Activated CD4-positive, alpha-beta memory T cell treated with anti-CD3 and anti-CD28 coated beads for 36 hours (primary cell): ENCODE measurements at regions of chr15 and their contacts with region 1.

Region 1: DNA sequence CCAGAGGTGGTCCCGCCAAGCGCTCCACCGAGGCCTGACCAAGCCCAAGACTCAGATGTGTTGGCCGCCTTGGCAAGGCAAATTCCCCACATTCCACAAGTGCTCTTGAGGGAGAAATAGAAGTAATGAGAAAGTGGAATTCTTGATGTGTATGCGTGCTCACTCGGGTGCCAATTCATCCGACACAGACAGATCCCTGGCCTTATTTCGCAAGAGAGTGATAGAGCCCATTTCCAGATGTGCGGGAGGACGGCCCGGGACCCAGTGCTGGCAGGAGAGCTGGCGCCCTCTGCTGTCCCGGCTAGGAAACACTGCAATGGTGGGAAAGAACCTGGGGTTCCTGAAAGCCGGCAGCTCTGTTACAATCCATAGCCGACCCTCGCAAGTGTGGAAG is 76.0 kb downstream of the HMG20A start:
- DNase-seq: peak; percentile 81
- H3K4me3 Mint-ChIP-seq: no peak overlapping the region
- H3K27ac Mint-ChIP-seq: no peak overlapping the region
- H3K4me1 Mint-ChIP-seq: peaks cover 17% of the 10 kb centered on the region
- H3K27me3 Mint-ChIP-seq: no peaks in the 10 kb centered on the region

Region 2: DNA sequence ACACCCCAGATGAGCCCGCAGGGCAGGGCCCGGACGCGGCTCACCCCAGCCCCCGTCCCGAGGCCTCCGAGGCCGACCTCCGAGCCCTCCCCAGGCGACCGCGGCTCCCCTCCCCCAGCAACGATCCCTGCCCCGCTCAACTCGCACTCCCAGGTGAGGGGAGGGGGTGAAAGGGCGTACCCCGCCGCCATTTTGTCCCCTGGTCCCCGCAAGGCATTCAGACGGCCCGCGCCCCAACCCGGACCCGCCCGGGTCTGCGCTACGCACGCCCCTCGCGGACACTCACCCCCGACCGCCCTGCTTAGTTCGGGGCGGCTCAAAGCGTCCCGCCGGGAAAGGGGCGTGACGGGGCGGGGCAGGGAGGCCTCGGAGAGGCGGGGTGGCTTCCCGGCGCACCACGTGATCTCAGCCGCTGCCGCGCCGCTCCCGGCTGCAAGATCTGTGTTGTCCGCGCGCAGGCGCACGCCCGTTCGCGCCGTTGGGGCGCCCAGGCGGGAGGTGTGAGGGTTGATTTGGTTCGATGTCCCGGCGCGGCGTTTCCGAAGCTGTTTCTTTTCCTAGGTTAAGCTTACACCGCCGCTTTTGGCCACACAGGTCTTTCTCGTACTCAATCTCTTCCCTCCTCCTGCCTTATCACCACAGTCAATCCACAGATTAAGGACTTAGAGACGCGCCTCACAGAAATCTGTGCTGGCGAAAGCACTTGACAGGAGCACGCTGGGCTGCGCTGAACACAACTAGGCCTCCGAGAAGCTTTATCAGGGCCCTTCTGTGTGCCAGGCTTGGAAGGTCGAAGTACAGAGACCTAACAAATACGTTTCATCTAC is 591.5 kb before region 1 on chr15 and contains the start of gene SCAPER:
- CTCF ChIA-PET with region 1: interaction called, 3 read pairs
- POLR2A ChIA-PET with region 1: no interaction called
- intact Hi-C with region 1: loop called (anchors 10 kb)
- DNase-seq: peak; percentile 95
- H3K4me3 Mint-ChIP-seq: peak within 1 kb of the TSS; percentile 91
- H3K27ac Mint-ChIP-seq: peak within 1 kb of the TSS; percentile 83
- H3K4me1 Mint-ChIP-seq: peaks cover 31% of the 10 kb centered on the region
- H3K27me3 Mint-ChIP-seq: no peaks in the 10 kb centered on the region
- total RNA-seq, gene SCAPER: 21.5 to 22.9 TPM

Region 3: GRCh38 chr15:77107531-77108355 is 389.0 kb before region 1 on chr15:
- CTCF ChIA-PET with region 1: interaction called, 15 read pairs
- POLR2A ChIA-PET with region 1: no interaction called
- intact Hi-C with region 1: no loop called
- DNase-seq: peak; percentile 61
- H3K4me3 Mint-ChIP-seq: no peak overlapping the region
- H3K27ac Mint-ChIP-seq: no peak overlapping the region
- H3K4me1 Mint-ChIP-seq: no peaks in the 10 kb centered on the region
- H3K27me3 Mint-ChIP-seq: no peaks in the 10 kb centered on the region

Region 4: GRCh38 chr15:77118882-77119321 is 377.8 kb before region 1 on chr15:
- CTCF ChIA-PET with region 1: interaction called, 80 read pairs
- POLR2A ChIA-PET with region 1: no interaction called
- intact Hi-C with region 1: loop called (anchors 2 kb)
- DNase-seq: peak; percentile 42
- H3K4me3 Mint-ChIP-seq: no peak overlapping the region
- H3K27ac Mint-ChIP-seq: no peak overlapping the region
- H3K4me1 Mint-ChIP-seq: peaks cover 5% of the 10 kb centered on the region
- H3K27me3 Mint-ChIP-seq: no peaks in the 10 kb centered on the region

Region 5: GRCh38 chr15:77186594-77187011 is 310.1 kb before region 1 on chr15:
- CTCF ChIA-PET with region 1: interaction called, 47 read pairs
- POLR2A ChIA-PET with region 1: no interaction called
- intact Hi-C with region 1: loop called (anchors 1 kb)
- DNase-seq: no peak
- H3K4me3 Mint-ChIP-seq: no peak overlapping the region
- H3K27ac Mint-ChIP-seq: no peak overlapping the region
- H3K4me1 Mint-ChIP-seq: peaks cover 39% of the 10 kb centered on the region
- H3K27me3 Mint-ChIP-seq: no peaks in the 10 kb centered on the region

Region 6: DNA sequence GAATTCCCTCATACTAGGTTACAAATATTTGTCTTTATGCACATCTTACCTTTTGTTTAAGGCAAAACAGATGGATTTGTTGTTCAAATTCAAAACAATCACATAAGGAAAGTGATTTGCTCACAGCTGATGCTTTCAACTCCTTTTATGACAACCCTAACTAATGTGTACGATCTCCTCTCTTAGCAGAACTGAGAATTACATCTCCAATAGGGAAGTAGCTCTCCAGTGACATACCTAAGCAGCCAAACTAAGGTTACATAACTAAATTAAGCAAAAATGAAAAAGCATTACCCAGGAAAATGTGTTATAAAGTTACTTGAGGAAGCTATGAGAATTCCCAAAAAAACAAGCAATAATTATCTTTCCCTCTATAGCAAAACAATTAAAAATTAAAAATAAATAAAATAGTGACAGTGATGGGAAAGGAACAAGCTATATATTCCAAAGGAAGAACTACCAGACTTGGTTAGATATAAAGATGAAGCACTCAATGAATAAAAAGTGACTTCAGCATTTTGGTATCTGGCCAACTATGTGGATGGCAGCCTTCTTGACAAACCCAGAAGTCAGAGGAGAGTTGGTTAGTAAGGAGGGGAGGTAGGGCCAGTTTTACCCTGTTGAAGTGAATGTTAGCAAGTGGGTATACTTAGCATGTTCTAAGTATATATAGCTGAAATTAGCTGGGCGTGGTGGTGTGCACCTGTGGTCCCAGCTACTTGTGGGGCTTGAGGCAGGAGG is 109.2 kb before region 1 on chr15:
- CTCF ChIA-PET with region 1: no interaction called
- POLR2A ChIA-PET with region 1: no interaction called
- intact Hi-C with region 1: no loop called
- DNase-seq: no peak
- H3K4me3 Mint-ChIP-seq: no peak overlapping the region
- H3K27ac Mint-ChIP-seq: no peak overlapping the region
- H3K4me1 Mint-ChIP-seq: peaks cover 7% of the 10 kb centered on the region
- H3K27me3 Mint-ChIP-seq: no peaks in the 10 kb centered on the region

Region 7: GRCh38 chr15:77810130-77810571 is 313.4 kb after region 1 on chr15:
- CTCF ChIA-PET with region 1: no interaction called
- POLR2A ChIA-PET with region 1: no interaction called
- intact Hi-C with region 1: no loop called
- DNase-seq: no peak
- H3K4me3 Mint-ChIP-seq: no peak overlapping the region
- H3K27ac Mint-ChIP-seq: no peak overlapping the region
- H3K4me1 Mint-ChIP-seq: no peaks in the 10 kb centered on the region
- H3K27me3 Mint-ChIP-seq: no peaks in the 10 kb centered on the region